Activated T-helper 2 cell treated with anti-CD3 and anti-CD28 coated beads, Interferon-gamma antibody, Interleukin-2, Interleukin-4, amounts not matched to agents 10 μg/mL and 5 μg/mL and 100 μg/mL, durations not matched to agents 14 hours and 24 hours and 36 hours (primary cell): ENCODE measurements at regions of chr12 and their contacts with region 1.

Region 1: DNA sequence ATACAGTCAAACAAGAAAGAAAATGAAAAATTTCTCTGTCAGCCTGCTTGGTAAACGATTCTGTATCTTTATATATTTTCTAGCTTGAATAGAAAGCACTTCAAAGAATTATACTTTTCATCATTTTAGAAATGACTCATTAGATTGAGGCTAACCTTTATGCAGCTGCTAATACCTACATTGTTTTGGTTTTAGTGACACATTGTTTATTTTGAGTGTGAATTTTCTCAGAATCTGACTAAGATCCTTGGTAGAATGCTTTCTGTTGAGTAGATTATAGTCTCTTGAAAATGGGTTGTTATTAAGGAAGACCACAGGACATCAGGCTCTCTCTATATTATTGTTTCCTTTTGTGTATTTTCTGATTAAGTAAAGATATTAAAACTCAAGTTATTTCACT is at the start of gene PMCH:
- DNase-seq: no peak
- H3K4me3 Mint-ChIP-seq: peak within 1 kb of the TSS; percentile 63
- H3K27ac Mint-ChIP-seq: peak within 1 kb of the TSS; percentile 73
- H3K4me1 Mint-ChIP-seq: peaks cover 38% of the 10 kb centered on the region
- H3K27me3 Mint-ChIP-seq: no peaks in the 10 kb centered on the region
- total RNA-seq, gene PMCH: 210 and 221 TPM in 2 replicates

Region 2: DNA sequence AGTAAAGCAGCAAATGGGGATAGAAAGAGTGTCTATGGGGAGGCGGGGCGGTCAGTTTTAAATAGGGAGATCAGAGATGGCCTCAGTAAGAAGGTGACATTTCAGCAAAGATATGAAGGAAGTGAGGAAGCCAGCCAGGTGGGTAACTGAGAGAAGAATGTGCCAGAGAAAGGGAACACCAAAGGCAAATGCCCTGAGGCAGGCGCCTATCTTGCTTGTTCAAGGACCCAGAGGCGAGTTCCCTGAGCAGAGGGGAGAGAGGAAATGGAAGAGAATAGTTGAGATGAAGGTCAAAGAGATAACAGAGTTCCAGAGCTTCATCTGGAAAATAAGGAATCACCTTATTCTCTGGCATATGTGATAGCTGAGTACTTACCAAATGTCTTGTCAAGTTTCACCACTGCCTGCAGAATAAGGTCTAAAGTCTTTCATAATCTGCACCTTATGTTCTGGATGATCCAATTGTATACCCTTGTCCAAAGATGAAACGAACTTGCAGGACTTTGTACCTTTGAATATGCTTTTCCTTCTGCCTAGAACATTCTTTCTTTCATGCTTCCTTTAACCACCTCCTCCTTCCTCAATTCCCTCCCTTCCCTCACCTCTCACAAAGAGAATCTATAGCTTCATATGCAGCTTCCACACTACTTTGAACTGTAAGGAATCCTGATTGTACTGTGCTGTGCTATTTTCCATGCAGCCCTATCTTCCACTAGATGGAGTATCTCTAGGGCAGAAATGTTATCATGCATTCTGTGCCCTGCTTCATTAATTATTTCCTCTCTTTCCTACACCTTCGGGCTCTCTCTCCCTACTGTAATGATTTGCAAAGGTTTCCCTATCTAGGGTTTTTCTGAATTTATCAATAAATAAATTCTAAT is 405.5 kb before region 1 on chr12:
- intact Hi-C with region 1: loop called (anchors 10 kb)
- DNase-seq: no peak
- H3K4me3 Mint-ChIP-seq: no peak overlapping the region
- H3K27ac Mint-ChIP-seq: peak overlapping the region; percentile 79
- H3K4me1 Mint-ChIP-seq: peaks cover 50% of the 10 kb centered on the region
- H3K27me3 Mint-ChIP-seq: no peaks in the 10 kb centered on the region

Region 3: DNA sequence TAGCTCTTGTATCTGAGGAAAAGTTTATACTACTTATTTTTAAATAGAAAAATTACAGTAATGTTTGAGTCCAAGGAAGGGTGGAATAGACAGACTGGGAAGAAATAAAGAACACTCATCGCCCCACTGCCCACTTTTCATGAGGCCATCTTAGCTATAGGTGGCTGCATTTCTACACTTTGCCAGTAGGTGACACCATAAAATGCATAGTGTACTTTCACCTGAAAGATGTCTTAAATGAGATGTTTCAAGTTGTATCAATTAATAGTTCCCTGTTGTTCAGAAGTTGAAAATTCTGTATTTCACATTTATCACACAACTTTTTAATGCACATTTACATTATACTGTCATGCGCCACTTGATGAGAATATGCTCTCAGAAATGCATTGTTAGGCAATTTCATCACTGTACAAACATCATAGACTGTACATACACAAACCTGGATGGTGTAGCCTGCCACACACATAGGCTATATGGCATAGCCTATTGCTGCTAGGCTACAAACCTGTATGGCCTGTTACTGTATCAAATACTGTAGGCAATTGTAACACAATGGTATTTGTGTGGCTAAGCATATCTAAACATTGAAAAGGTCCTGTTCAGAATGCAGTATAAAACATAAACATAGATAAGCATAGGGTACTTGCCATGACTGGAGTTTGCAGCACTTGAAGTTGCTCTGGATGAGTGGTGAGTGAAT is 27.7 kb before region 1 on chr12:
- intact Hi-C with region 1: loop called (anchors 1 kb)
- DNase-seq: no peak
- H3K4me3 Mint-ChIP-seq: no peak overlapping the region
- H3K27ac Mint-ChIP-seq: no peak overlapping the region
- H3K4me1 Mint-ChIP-seq: peaks cover 26% of the 10 kb centered on the region
- H3K27me3 Mint-ChIP-seq: no peaks in the 10 kb centered on the region

Region 4: GRCh38 chr12:102232446-102232845 is 34.7 kb after region 1 on chr12:
- intact Hi-C with region 1: no loop called
- DNase-seq: no peak
- H3K4me3 Mint-ChIP-seq: no peak overlapping the region
- H3K27ac Mint-ChIP-seq: no peak overlapping the region
- H3K4me1 Mint-ChIP-seq: no peaks in the 10 kb centered on the region
- H3K27me3 Mint-ChIP-seq: peaks cover 22% of the 10 kb centered on the region

Region 5: DNA sequence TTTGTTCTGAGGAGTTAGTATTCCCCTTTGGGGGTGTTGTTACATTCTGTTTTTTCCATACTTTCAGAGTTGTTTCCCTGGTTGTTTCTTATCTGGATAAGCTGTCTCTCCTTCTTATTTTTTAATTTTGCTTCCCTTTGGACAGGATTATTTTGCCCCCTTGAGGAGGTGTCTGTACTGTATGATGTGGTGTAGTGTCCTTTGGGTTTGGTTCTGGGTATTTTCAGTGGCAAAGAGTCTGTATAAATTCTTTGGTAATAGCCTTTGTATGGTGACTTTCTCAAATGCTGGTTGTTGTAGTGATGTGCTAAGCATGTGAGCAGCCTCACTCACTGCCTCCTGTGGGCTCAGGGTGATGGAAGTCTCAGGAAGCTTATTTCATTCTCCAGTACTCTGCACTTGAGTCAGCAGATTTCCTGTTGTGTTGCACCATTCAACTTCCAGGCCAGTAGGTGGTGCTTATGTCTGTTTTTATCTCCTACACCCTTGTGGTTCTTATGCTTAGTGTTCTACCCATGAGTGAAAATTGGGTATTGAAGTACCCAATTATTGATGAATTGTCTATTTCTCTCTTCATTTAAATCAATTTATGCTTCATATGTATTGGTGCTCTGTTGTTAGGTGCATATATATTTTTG is 103.2 kb after region 1 on chr12:
- intact Hi-C with region 1: loop called (anchors 5 kb)
- DNase-seq: peak; percentile 12
- H3K4me3 Mint-ChIP-seq: no peak overlapping the region
- H3K27ac Mint-ChIP-seq: no peak overlapping the region
- H3K4me1 Mint-ChIP-seq: peaks cover 31% of the 10 kb centered on the region
- H3K27me3 Mint-ChIP-seq: peaks cover 18% of the 10 kb centered on the region

Region 6: DNA sequence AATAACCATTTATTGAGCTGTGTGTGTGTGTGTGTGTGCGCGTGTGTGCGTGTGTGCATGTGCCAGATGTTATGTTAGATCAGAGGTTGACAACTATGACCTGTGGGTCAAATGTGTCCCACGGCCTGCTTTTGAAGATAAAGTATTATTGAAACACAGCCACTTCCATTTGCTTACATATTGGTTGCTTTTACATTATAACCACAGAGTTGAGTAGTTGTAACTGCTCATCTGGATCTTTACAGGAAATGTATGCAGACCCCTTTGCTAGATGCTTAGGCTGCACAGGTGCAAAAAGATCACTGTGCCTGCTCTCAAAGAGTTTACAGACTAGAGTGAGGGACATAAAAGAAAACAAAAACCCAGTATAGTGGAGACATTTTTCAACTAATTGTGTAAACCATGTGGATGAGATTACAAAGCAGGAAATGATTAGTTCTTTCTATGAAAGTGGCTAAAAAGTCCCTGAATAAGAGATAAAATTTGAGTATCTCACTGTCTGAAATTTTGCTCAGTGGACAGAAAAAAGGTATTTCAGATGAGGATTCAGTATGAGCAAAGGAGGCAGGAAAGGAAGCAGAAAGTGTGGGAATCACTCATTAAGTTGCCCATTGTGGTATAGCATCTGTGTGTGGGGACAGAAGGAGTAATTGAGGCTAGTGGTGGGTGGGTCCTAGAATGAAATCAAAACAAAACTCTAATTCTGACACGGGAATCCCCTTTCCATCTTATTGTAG is 530.9 kb after region 1 on chr12:
- intact Hi-C with region 1: loop called (anchors 1 kb)
- DNase-seq: no peak
- H3K4me3 Mint-ChIP-seq: no peak overlapping the region
- H3K27ac Mint-ChIP-seq: peak overlapping the region; percentile 36
- H3K4me1 Mint-ChIP-seq: peaks cover 14% of the 10 kb centered on the region
- H3K27me3 Mint-ChIP-seq: peaks cover 4% of the 10 kb centered on the region